B cell (primary cell): ENCODE measurements at regions of chr6 and their contacts with region 1.

Region 1: DNA sequence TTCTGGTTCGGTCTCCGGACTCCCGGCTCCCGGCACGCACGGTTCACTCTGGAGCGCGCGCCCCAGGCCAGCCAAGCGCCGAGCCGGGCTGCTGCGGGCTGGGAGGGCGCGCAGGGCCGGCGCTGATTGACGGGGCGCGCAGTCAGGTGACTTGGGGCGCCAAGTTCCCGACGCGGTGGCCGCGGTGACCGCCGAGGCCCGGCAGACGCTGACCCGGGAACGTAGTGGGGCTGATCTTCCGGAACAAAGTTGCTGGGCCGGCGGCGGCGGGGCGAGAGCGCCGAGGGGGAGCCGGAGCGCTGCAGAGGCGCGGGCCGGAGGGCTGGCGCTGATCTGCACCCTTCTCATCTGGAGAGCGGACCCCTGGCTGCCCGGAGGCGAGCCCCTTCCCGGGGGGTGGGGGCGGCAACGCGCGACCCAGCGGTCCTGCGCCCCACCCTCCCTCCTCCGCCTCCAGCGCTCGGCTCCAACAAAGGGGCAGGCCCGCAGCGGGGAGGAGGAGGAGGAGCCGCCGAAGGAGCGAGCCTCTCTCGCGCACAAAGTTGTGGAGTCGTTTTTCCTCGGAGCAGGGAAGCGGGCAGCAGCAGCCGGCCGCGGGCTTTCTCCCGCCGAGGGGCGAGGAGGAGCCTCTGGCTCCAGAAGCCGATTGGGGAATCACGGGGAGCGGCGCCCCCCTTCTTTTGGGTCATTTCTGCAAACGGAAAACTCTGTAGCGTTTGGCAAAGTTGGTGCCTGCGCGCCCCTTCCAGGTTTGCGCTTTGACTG is at the start of gene UTRN:
- DNase-seq: peak; percentile 64
- ATAC-seq: peak; percentile 50
- H3K4me3 ChIP-seq: peak within 1 kb of the TSS; percentile 72 to 90 (median 77)
- H3K4me3 Mint-ChIP-seq: peak within 1 kb of the TSS; percentile 97
- H3K27ac ChIP-seq: no peak within 1 kb of the TSS
- H3K27ac Mint-ChIP-seq: peak within 1 kb of the TSS; percentile 53
- H3K4me1 ChIP-seq: peaks cover 20% of the 10 kb centered on the region in 2 donors
- H3K4me1 Mint-ChIP-seq: peaks cover 19% of the 10 kb centered on the region
- H3K27me3 ChIP-seq: peaks cover 0 to 23% (median 5%) of the 10 kb centered on the region in 4 experiments
- H3K27me3 Mint-ChIP-seq: peaks cover 21% of the 10 kb centered on the region
- CTCF ChIP-seq: no peak
- total RNA-seq, gene UTRN: 213 and 224 TPM in 2 replicates

Region 2: DNA sequence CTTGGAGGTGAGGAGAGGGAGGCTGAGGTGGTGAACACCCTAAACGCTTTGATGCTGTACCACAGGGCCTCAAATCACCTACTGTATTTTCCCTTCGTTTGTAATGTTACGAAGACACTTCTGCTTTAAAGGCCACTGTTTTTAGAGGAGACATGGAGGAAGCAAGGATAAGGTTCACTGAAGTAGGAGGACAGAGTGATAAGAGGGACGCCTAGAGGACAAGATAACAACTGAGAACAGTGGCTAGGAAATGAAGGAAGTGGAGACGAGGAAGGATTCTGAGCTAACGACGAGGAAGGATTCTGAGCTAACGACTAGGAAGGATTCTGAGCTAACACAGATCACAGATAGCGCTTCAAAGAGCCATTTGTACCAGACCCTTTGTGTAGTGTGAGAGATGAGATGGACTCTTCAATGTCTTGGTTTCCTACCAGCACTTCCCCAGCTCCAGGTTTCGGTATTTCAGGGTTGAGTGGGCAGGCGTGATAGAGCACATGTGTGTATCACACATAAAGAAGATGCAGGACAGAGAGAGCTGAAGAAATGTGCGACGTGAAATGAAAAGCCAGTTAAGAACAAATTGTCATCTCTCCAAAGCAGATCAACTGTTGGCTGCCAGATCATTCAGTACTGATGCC is 197.1 kb before region 1 on chr6:
- CTCF ChIA-PET with region 1: no interaction called
- POLR2A ChIA-PET with region 1: no interaction called
- intact Hi-C with region 1: no loop called
- DNase-seq: no peak
- ATAC-seq: no peak
- H3K4me3 ChIP-seq: no peak overlapping the region
- H3K4me3 Mint-ChIP-seq: no peak overlapping the region
- H3K27ac ChIP-seq: no peak overlapping the region
- H3K27ac Mint-ChIP-seq: no peak overlapping the region
- H3K4me1 ChIP-seq: peaks cover 3 to 11% of the 10 kb centered on the region in 2 donors
- H3K4me1 Mint-ChIP-seq: peaks cover 9% of the 10 kb centered on the region
- H3K27me3 ChIP-seq: no peaks in the 10 kb centered on the region
- H3K27me3 Mint-ChIP-seq: no peaks in the 10 kb centered on the region
- CTCF ChIP-seq: no peak

Region 3: GRCh38 chr6:144104898-144105487 is 180.0 kb before region 1 on chr6:
- CTCF ChIA-PET with region 1: no interaction called
- POLR2A ChIA-PET with region 1: no interaction called
- intact Hi-C with region 1: loop called (anchors 5 kb)
- DNase-seq: peak; percentile 81
- ATAC-seq: peak; percentile 80
- H3K4me3 ChIP-seq: no peak overlapping the region
- H3K4me3 Mint-ChIP-seq: no peak overlapping the region
- H3K27ac ChIP-seq: no peak overlapping the region
- H3K27ac Mint-ChIP-seq: no peak overlapping the region
- H3K4me1 ChIP-seq: no peaks in the 10 kb centered on the region
- H3K4me1 Mint-ChIP-seq: no peaks in the 10 kb centered on the region
- H3K27me3 ChIP-seq: no peaks in the 10 kb centered on the region
- H3K27me3 Mint-ChIP-seq: no peaks in the 10 kb centered on the region
- CTCF ChIP-seq: peak; percentile 84

Region 4: DNA sequence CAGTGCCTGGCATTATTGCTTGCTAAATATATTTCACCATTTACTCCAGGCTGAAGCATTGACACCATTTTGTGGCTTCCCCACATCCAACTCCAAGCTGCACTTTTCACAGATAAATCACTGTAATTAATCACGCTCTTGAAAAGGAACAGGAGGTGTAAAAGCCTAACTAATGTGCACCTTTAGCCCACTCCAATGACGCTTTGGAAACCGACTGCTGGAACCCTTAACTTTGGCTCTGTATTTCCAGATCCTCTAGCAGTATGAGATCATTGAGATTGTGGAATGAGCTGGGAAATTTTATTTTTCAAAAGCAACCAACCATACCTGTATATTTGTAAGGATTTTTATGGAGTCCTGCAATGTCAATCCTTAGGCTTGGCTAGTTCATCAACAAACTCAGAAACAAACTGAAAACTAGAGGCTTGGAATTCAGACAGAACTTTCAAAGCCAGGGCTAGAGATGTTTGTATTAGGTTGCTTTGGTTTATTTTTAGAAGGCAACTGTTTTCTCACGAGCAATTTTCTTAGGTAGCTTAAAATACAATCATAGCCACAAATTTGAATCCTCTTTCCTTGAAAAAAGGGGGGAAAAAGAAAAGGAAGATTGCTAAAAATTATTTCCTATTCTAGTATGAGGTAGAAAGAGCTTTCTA is 52.7 kb before region 1 on chr6:
- CTCF ChIA-PET with region 1: no interaction called
- POLR2A ChIA-PET with region 1: no interaction called
- intact Hi-C with region 1: no loop called
- DNase-seq: no peak
- ATAC-seq: no peak
- H3K4me3 ChIP-seq: no peak overlapping the region
- H3K4me3 Mint-ChIP-seq: no peak overlapping the region
- H3K27ac ChIP-seq: no peak overlapping the region
- H3K27ac Mint-ChIP-seq: no peak overlapping the region
- H3K4me1 ChIP-seq: no peaks in the 10 kb centered on the region
- H3K4me1 Mint-ChIP-seq: no peaks in the 10 kb centered on the region
- H3K27me3 ChIP-seq: no peaks in the 10 kb centered on the region
- H3K27me3 Mint-ChIP-seq: no peaks in the 10 kb centered on the region
- CTCF ChIP-seq: no peak

Region 5: DNA sequence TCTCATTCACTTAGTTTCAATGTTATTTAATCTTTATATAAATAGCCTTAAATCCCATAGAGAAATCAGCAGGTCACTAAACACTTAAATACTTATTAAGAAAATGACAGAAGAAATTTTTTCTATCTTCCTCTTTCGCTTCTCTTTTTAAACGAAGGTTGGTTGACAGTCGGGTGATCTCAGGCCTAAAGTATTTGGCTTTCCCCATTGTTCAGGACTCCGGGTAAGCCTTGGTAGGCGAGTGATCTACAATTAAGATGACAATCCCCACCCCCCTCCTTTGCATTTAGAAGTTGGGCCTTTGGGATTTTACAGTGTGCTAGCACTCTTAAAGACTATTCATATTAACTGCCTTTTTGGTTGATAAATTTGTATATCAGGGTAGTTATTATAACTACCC is 19.6 kb before region 1 on chr6:
- CTCF ChIA-PET with region 1: no interaction called
- POLR2A ChIA-PET with region 1: no interaction called
- intact Hi-C with region 1: loop called (anchors 2 kb)
- DNase-seq: peak; percentile 71
- ATAC-seq: peak; percentile 91
- H3K4me3 ChIP-seq: no peak overlapping the region
- H3K4me3 Mint-ChIP-seq: peak overlapping the region; percentile 29
- H3K27ac ChIP-seq: no peak overlapping the region
- H3K27ac Mint-ChIP-seq: no peak overlapping the region
- H3K4me1 ChIP-seq: peaks cover 17% of the 10 kb centered on the region in 2 donors
- H3K4me1 Mint-ChIP-seq: peaks cover 20% of the 10 kb centered on the region
- H3K27me3 ChIP-seq: no peaks in the 10 kb centered on the region
- H3K27me3 Mint-ChIP-seq: no peaks in the 10 kb centered on the region
- CTCF ChIP-seq: no peak

Region 6: DNA sequence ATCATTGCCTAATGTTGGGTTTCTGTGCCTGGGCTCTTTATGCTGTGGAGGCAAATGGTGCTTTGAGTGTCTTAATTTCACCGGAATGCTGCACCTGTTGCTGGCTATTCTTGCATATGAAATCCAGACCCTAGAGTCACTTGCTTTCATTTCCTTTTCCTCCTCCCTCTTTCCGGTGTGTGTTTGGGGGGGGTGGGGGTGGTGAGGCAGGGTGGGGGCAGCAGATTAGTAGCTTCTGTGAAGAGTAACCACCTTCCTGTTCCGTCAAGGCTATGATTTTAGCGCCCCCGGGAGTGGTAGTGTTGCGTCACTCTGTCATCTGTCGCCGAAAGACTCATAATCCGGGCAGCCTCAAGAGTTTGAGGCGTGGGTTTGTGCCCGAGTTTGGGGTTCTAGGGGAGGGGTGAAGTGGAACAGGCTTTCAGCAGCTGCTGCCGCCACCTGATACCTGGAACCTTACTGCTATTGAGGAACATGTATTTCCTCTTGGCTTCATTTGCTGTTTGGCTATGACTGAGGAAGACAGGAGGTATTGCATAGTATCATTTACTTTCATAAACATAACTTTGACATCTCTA is 49.3 kb after region 1 on chr6:
- CTCF ChIA-PET with region 1: no interaction called
- POLR2A ChIA-PET with region 1: interaction called, 3 read pairs
- intact Hi-C with region 1: loop called (anchors 1 kb)
- DNase-seq: peak; percentile 92
- ATAC-seq: peak; percentile 76
- H3K4me3 ChIP-seq: peak overlapping the region in 4 of 5 experiments; percentile 34 to 53 (median 36)
- H3K4me3 Mint-ChIP-seq: peak overlapping the region; percentile 82
- H3K27ac ChIP-seq: peak overlapping the region; percentile 82 to 94
- H3K27ac Mint-ChIP-seq: peak overlapping the region; percentile 94
- H3K4me1 ChIP-seq: peaks cover 56 to 61% of the 10 kb centered on the region in 2 donors
- H3K4me1 Mint-ChIP-seq: peaks cover 73% of the 10 kb centered on the region
- H3K27me3 ChIP-seq: no peaks in the 10 kb centered on the region
- H3K27me3 Mint-ChIP-seq: no peaks in the 10 kb centered on the region
- CTCF ChIP-seq: no peak

Region 7: GRCh38 chr6:144349690-144350527 is 64.9 kb after region 1 on chr6:
- CTCF ChIA-PET with region 1: interaction called, 3 read pairs
- POLR2A ChIA-PET with region 1: no interaction called
- intact Hi-C with region 1: loop called (anchors 2 kb)
- DNase-seq: peak; percentile 56
- ATAC-seq: peak; percentile 56
- H3K4me3 ChIP-seq: peak overlapping the region in 4 of 5 experiments; percentile 9 to 55 (median 46)
- H3K4me3 Mint-ChIP-seq: peak overlapping the region; percentile 83
- H3K27ac ChIP-seq: peak overlapping the region; percentile 79 to 80
- H3K27ac Mint-ChIP-seq: peak overlapping the region; percentile 96
- H3K4me1 ChIP-seq: peaks cover 85 to 95% of the 10 kb centered on the region in 2 donors
- H3K4me1 Mint-ChIP-seq: peaks cover 85% of the 10 kb centered on the region
- H3K27me3 ChIP-seq: no peaks in the 10 kb centered on the region
- H3K27me3 Mint-ChIP-seq: no peaks in the 10 kb centered on the region
- CTCF ChIP-seq: no peak

Region 8: DNA sequence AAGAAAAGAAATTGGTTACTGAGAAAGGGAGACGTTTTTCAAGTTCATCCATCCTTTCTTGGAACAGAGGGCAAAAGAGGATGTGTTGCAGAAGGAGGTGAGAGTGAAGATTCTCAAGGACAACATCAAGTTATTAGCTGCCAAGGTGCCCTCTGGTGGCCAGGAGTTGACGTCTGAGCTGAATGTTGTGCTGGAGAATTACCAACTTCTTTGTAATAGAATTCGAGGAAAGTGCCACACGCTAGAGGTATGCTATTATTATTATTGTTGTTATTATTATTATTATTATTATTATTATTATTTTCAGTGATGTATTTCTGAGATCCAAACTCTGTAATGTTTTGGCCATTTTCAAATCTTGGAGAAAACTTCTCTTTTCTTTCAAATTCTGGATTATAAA is 197.2 kb after region 1 on chr6:
- CTCF ChIA-PET with region 1: interaction called, 5 read pairs
- POLR2A ChIA-PET with region 1: no interaction called
- intact Hi-C with region 1: loop called (anchors 10 kb)
- DNase-seq: peak; percentile 76
- ATAC-seq: peak; percentile 71
- H3K4me3 ChIP-seq: no peak overlapping the region
- H3K4me3 Mint-ChIP-seq: no peak overlapping the region
- H3K27ac ChIP-seq: peak overlapping the region in 1 of 2 donors; percentile 21
- H3K27ac Mint-ChIP-seq: peak overlapping the region; percentile 3
- H3K4me1 ChIP-seq: no peaks in the 10 kb centered on the region
- H3K4me1 Mint-ChIP-seq: no peaks in the 10 kb centered on the region
- H3K27me3 ChIP-seq: no peaks in the 10 kb centered on the region
- H3K27me3 Mint-ChIP-seq: no peaks in the 10 kb centered on the region
- CTCF ChIP-seq: peak; percentile 80